ENCODE measurements at regions of chr6 and their contacts with region 1.

Region 1: DNA sequence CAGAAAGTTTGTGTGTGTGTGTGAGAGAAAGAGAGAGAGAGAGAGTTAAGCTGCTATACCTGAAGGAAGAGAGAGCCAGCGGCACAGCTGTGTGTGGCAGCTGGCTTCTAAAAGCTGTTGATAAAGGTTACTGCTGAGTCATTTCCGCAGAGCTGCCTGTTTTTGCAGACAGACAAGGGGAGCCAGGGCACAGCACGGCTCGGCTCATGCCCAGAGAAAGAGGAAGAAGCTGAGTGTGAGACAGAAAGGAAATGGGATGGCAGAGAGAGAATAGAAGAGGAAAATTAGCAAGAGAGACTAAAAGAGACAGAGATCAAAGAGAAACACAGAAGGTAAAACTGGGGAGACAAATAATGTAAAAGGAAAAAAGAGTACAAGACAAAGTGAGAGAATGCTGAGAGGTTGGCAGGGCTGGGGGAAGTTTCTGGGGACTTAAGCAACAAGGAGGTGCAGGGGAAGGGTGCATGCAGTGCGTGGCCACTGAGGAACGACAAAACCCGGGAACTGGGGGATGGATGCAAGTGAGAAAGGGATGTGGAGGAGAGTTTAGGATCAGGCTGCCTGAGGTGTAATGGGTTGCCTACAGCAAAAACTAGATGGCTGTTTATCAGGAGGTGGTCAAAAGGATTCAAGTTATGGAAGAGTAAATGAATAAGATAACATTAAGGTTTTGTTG is 22.7 kb downstream of the HLA-A start:
- DNase-seq: peak; percentile 79 to 90
- ATAC-seq: peak; percentile 91
- H3K4me3 ChIP-seq: peak overlapping the region; percentile 12 to 36
- H3K27ac ChIP-seq: peak overlapping the region; percentile 20 to 95
- H3K4me1 ChIP-seq: peaks cover 0 to 6% of the 10 kb centered on the region in 2 donors
- H3K27me3 ChIP-seq: no peaks in the 10 kb centered on the region

Region 2: DNA sequence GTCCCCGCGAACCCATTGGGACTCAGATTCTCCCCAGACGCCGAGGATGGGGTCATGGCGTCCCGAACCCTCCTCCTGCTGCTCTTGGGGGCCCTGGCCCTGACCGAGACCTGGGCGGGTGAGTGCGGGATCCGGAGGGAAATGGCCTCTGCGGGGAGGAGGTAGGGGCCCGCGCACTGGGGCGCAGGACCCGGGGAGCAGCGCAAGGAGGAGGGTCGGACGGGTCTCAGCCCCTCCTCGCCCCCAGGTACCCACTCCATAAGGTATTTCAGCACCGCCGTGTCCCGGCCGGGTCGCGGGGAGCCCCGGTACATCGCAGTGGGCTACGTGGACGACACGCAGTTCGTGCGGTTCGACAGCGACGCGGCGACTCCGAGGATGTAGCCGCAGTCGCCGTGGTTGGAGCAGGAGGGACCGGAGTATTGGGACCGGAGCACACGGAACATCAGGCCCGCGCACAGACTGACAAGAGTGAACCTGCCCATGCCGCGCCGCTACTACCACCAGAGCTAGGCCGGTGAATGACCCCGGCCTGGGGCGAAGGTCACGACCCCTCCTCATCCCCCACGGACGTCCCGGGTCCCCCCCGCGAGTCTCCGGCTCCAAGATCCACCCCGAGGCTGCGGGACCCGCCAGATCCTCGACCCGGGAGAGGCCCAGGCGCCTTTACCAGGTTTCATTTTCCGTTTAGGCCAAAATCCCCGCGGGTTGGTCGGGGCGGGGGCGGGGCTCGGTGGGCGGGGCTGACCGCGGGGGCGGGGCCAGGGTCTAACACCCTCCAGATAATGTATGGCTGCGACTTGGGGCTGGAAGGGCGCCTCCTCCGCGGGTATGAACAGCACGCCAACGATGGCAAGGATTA is 38.4 kb before region 1 on chr6:
- intact Hi-C with region 1: loop called (anchors 5 kb)
- DNase-seq: peak; percentile 89 to 91
- ATAC-seq: peak; percentile 93
- H3K4me3 ChIP-seq: peak overlapping the region; percentile 38 to 56
- H3K27ac ChIP-seq: peak overlapping the region in 1 of 2 donors; percentile 72
- H3K4me1 ChIP-seq: no peaks in the 10 kb centered on the region
- H3K27me3 ChIP-seq: no peaks in the 10 kb centered on the region

Region 3: DNA sequence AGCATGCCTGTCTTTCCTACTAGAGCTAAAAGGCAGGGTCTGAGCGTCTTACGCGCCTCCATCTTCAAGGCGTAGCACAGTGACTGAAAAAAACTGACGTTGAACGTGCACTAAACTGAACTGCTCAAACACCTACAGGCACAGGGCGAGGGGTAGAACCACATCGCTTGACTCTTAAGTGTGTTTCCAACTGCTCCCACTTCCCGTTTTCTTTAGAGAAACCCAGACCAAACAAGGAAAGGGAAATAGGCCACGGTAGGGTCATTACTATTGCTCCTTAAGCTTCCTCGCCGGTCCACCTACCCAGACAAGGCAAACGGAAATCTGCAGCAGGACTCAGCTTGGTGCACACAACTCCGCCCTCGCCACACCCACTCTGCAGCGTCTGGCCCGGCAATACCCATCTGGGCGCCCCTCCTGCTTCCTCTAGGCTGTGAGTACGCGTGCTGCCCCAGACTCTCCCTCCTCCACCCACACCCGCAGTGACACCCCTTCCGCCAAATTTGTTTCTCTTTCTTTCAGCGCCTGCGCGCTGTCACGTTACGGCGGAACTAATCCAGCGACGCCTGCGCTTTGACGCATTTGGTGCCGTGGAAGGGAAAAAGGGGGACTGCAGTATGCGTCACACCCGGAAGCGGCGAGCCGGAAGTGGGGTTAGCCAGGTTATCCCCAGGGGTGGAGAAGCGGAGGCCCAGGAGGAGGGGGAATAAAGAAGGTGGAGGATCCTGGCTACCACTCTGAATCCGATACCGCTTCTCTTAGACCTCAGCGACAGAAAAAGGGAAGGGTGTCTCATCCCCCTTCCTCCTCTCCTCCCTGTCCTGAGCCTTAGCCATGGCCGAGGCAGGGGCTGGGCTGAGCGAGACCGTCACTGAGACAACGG is 101.8 kb after region 1 on chr6 and contains the start of gene PPP1R11:
- intact Hi-C with region 1: loop called in 1 of 2 experiments (anchors 1 kb)
- DNase-seq: peak; percentile 98 to 99
- ATAC-seq: peak; percentile 99
- H3K4me3 ChIP-seq: peak within 1 kb of the TSS; percentile 55 to 91
- H3K27ac ChIP-seq: peak within 1 kb of the TSS; percentile 59 to 89
- H3K4me1 ChIP-seq: peaks cover 0 to 2% of the 10 kb centered on the region in 2 donors
- H3K27me3 ChIP-seq: no peaks in the 10 kb centered on the region
- total RNA-seq, gene PPP1R11: 40.0 to 43.8 TPM

Measured in aorta (tissue), 5 donors.